Activated CD4-positive, alpha-beta memory T cell treated with anti-CD3 and anti-CD28 coated beads for 36 hours (primary cell): ENCODE measurements at regions of chr6 and their contacts with region 1.

Region 1: GRCh38 chr6:10837995-10838793 is at the start of gene MAK:
- DNase-seq: peak; percentile 91
- H3K4me3 Mint-ChIP-seq: peak within 1 kb of the TSS; percentile 73
- H3K27ac Mint-ChIP-seq: peak within 1 kb of the TSS; percentile 98
- H3K4me1 Mint-ChIP-seq: peaks cover 31% of the 10 kb centered on the region
- H3K27me3 Mint-ChIP-seq: peaks cover 40% of the 10 kb centered on the region
- total RNA-seq, gene MAK: 0.87 to 1.1 TPM

Region 2: GRCh38 chr6:10528170-10528981 is 309.8 kb before region 1 on chr6:
- CTCF ChIA-PET with region 1: no interaction called
- POLR2A ChIA-PET with region 1: no interaction called
- intact Hi-C with region 1: loop called (anchors 1 kb)
- DNase-seq: peak; percentile 37
- H3K4me3 Mint-ChIP-seq: peak overlapping the region; percentile 73
- H3K27ac Mint-ChIP-seq: peak overlapping the region; percentile 61
- H3K4me1 Mint-ChIP-seq: peaks cover 47% of the 10 kb centered on the region
- H3K27me3 Mint-ChIP-seq: no peaks in the 10 kb centered on the region

Region 3: GRCh38 chr6:10722820-10723566 is 115.2 kb before region 1 on chr6 and contains the start of gene TMEM14C:
- CTCF ChIA-PET with region 1: no interaction called
- POLR2A ChIA-PET with region 1: no interaction called
- intact Hi-C with region 1: loop called (anchors 1 kb)
- DNase-seq: peak; percentile 95
- H3K4me3 Mint-ChIP-seq: peak within 1 kb of the TSS; percentile 84
- H3K27ac Mint-ChIP-seq: peak within 1 kb of the TSS; percentile 82
- H3K4me1 Mint-ChIP-seq: peaks cover 34% of the 10 kb centered on the region
- H3K27me3 Mint-ChIP-seq: no peaks in the 10 kb centered on the region
- total RNA-seq, gene TMEM14C: 84.9 to 87.6 TPM

Region 4: DNA sequence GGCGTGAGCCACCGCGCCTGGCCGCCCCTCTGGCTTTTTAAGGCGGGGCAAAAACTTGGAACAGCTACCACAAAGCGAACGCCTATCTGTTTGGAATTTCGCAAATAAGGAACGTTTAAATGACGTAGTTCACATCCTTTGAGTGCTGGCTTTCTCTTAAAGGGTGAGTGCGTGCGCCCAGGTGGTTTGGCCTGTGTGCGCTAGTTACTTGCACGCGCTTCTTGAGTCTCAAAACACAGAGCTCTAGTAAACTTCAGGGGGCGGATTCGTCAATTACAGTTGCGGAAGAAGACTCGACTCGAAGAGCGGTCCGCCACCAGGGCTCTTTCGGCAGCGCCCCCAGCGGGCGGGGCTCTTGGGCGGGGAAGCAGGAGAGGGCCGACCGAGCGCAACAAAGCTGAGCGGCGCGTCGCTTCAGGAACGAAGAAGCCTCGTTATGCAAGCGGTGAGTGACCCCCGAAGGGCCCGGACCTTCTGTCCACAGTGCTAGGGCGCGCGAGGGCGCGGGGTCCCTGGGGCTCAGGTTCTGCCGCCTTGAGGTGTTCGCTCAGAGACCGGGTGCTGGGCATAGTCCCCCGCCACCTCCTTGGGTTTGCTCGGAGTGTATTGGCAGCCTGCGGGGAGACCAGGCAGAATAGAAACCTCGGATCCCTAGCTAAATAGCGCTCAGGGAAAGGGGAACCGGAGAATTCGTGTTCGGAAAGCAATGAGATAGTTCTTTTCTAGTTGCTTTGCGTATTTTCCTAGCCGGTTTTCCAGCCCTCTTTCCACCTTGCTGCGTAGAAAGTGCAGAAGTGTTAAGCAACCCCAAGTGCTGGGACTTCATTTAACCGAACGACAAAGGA is 48.7 kb after region 1 on chr6 and contains the start of gene SYCP2L:
- CTCF ChIA-PET with region 1: interaction called, 4 read pairs
- POLR2A ChIA-PET with region 1: no interaction called
- intact Hi-C with region 1: loop called (anchors 2 kb)
- DNase-seq: peak; percentile 17
- H3K4me3 Mint-ChIP-seq: peak within 1 kb of the TSS; percentile 52
- H3K27ac Mint-ChIP-seq: no peak within 1 kb of the TSS
- H3K4me1 Mint-ChIP-seq: peaks cover 11% of the 10 kb centered on the region
- H3K27me3 Mint-ChIP-seq: peaks cover 68% of the 10 kb centered on the region
- total RNA-seq, gene SYCP2L: 0.10 TPM in 1 of 2 experiments, not detected in the other

Region 5: DNA sequence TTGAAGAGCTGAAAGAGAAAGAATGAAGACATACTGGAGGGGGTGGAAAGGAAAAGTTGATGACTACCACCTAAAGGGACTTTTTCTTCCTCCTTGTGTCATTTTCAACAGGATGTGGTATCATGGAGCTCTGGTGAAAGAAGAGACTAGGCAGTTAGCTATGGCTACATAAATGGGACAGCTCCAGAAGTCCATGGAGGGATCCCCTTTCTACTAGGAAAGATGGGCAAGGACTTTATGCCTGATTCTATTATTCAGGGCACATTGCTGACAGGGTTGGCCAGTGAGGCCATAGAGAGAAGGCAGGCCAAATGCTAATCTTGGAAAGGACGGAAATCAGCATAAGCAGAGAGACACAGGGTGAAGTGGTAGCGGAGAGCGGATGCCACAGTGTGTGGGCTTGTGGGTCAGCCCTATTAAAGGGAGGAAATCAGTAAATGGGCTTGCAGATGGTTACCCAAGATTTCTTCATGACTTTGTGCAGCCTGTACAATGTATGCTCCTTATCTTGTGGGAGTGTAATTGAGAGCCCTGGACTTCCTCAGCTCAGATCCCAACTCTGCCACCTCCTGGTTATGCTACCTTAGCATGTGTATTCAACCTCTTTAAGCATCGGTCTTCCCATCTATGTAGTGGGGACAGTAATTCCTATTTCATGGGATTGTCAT is 621.9 kb after region 1 on chr6:
- CTCF ChIA-PET with region 1: no interaction called
- POLR2A ChIA-PET with region 1: no interaction called
- intact Hi-C with region 1: loop called (anchors 1 kb)
- DNase-seq: peak; percentile 23
- H3K4me3 Mint-ChIP-seq: peak overlapping the region; percentile 57
- H3K27ac Mint-ChIP-seq: peak overlapping the region; percentile 90
- H3K4me1 Mint-ChIP-seq: peaks cover 31% of the 10 kb centered on the region
- H3K27me3 Mint-ChIP-seq: no peaks in the 10 kb centered on the region